Activated naive CD8-positive, alpha-beta T cell treated with anti-CD3 and anti-CD28 coated beads, Interleukin-2, amount 10 ng/mL, durations not matched to agents 7 days and 5 days (primary cell): ENCODE measurements at regions of chr15 and their contacts with region 1.

Region 1: GRCh38 chr15:64153480-64154367 is 2.2 kb downstream of the SNX22 start:
- DNase-seq: peak; percentile 95
- ATAC-seq: peak; percentile 87
- H3K4me3 Mint-ChIP-seq: peak overlapping the region; percentile 56
- H3K27ac Mint-ChIP-seq: peak overlapping the region; percentile 74
- H3K4me1 Mint-ChIP-seq: peaks cover 30% of the 10 kb centered on the region
- H3K27me3 Mint-ChIP-seq: peaks cover 12% of the 10 kb centered on the region

Region 2: GRCh38 chr15:64093627-64094417 is 59.9 kb before region 1 on chr15 and contains the start of gene CIAO2A:
- POLR2A ChIA-PET with region 1: interaction called, 24 read pairs
- DNase-seq: peak; percentile 82
- ATAC-seq: peak; percentile 79
- H3K4me3 Mint-ChIP-seq: peak within 1 kb of the TSS; percentile 90
- H3K27ac Mint-ChIP-seq: peak within 1 kb of the TSS; percentile 99
- H3K4me1 Mint-ChIP-seq: peaks cover 47% of the 10 kb centered on the region
- H3K27me3 Mint-ChIP-seq: no peaks in the 10 kb centered on the region
- total RNA-seq, gene CIAO2A: 57.6 to 61.5 TPM